Natural killer cell (primary cell): ENCODE measurements at regions of chr10 and their contacts with region 1.

Region 1: GRCh38 chr10:26468700-26469099 is 30.6 kb downstream of the APBB1IP start:
- DNase-seq: peak in 1 of 2 donors; percentile 81
- ATAC-seq: peak; percentile 69 to 83 (median 78)
- H3K4me3 ChIP-seq: no peak overlapping the region
- H3K4me3 Mint-ChIP-seq: peak overlapping the region; percentile 80
- H3K27ac ChIP-seq: peak overlapping the region; percentile 4
- H3K27ac Mint-ChIP-seq: peak overlapping the region; percentile 84 to 88
- H3K4me1 ChIP-seq: peaks cover 60% of the 10 kb centered on the region
- H3K4me1 Mint-ChIP-seq: peaks cover 88 to 95% of the 10 kb centered on the region in 2 donors
- H3K27me3 ChIP-seq: no peaks in the 10 kb centered on the region
- H3K27me3 Mint-ChIP-seq: no peaks in the 10 kb centered on the region
- CTCF ChIP-seq: no peak

Region 2: DNA sequence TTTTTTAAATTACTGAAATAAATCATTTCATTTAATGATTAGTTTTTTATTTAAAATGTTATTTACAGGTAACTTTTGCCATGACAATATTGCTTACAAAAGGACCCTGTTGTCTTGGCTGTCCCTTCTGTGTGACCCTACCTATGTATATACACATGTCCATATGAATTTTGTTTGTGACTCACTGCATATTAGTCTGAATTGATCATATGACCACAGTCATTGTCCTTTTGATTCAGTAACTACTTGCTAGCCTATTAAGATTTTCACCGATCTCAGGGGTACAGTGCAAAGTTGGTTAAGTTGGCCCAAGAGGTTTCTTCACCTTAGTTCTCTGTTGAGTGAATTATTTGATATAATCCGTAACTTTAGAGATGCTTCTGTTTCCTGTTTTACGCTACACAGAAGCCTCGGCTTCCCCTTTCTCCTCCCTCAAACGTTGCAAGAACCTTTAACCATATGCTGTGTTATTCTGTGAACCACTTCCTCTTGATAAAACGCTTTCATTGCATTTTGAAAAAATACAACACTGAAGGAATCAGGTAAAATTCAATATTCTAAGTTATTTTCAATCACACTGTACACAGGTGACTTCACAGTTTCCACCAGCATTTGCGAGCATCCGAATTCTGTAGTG is 13.3 kb after region 1 on chr10:
- intact Hi-C with region 1: loop called (anchors 2 kb)
- DNase-seq: peak in 1 of 2 donors; percentile 82
- ATAC-seq: peak; percentile 42 to 82 (median 71)
- H3K4me3 ChIP-seq: peak overlapping the region; percentile 20
- H3K4me3 Mint-ChIP-seq: peak overlapping the region; percentile 90
- H3K27ac ChIP-seq: peak overlapping the region; percentile 91
- H3K27ac Mint-ChIP-seq: peak overlapping the region; percentile 97 to 98
- H3K4me1 ChIP-seq: peaks cover 69% of the 10 kb centered on the region
- H3K4me1 Mint-ChIP-seq: peaks cover 74 to 78% of the 10 kb centered on the region in 2 donors
- H3K27me3 ChIP-seq: no peaks in the 10 kb centered on the region
- H3K27me3 Mint-ChIP-seq: no peaks in the 10 kb centered on the region
- CTCF ChIP-seq: no peak